ENCODE measurements at regions of chr4 and their contacts with region 1.

Region 1: GRCh38 chr4:74376888-74377483 is 12.0 kb downstream of the EREG start:
- DNase-seq: no peak
- H3K4me3 Mint-ChIP-seq: peak overlapping the region; percentile 77
- H3K27ac Mint-ChIP-seq: peak overlapping the region; percentile 95
- H3K4me1 Mint-ChIP-seq: peaks cover 10% of the 10 kb centered on the region
- H3K27me3 Mint-ChIP-seq: no peaks in the 10 kb centered on the region
- CTCF ChIP-seq: no peak

Region 2: DNA sequence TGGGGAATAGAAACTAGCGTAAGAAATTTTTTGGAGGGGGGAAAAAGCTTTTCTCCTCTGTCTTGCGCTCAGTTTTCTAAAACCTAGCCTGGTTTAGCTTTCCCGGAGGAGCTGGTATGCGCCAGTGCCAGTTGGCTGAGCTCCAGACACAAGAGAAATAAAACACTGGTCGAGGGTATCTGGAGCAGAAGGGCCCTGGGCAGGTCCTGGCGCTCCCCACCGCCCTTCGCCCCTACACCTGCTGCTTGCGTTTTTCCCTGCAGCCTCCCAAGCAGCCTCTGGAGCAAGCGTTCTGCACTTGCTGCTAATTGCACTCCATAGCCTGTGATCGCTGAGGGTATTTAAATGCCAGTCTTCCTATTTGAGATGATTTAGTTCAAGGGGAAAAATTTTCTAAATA is 11.2 kb before region 1 on chr4:
- CTCF ChIA-PET with region 1: interaction called, 5 read pairs
- intact Hi-C with region 1: loop called (anchors 1 kb)
- DNase-seq: no peak
- H3K4me3 Mint-ChIP-seq: peak overlapping the region; percentile 76
- H3K27ac Mint-ChIP-seq: peak overlapping the region; percentile 95
- H3K4me1 Mint-ChIP-seq: peaks cover 10% of the 10 kb centered on the region
- H3K27me3 Mint-ChIP-seq: no peaks in the 10 kb centered on the region
- CTCF ChIP-seq: no peak

Region 3: GRCh38 chr4:75892508-75892907 is 1515.5 kb after region 1 on chr4:
- CTCF ChIA-PET with region 1: no interaction called
- intact Hi-C with region 1: no loop called
- DNase-seq: peak; percentile 27
- H3K4me3 Mint-ChIP-seq: no peak overlapping the region
- H3K27ac Mint-ChIP-seq: no peak overlapping the region
- H3K4me1 Mint-ChIP-seq: no peaks in the 10 kb centered on the region
- H3K27me3 Mint-ChIP-seq: peaks cover 34% of the 10 kb centered on the region
- CTCF ChIP-seq: no peak

Measured in Calu3 (cell line).